ENCODE measurements at regions of chr6 and their contacts with region 1.

Region 1: GRCh38 chr6:159862103-159862502 is 28.7 kb upstream of the MAS1 start:
- DNase-seq: no peak
- ATAC-seq: no peak

Region 2: GRCh38 chr6:159941286-159942113 is 79.4 kb after region 1 on chr6:
- intact Hi-C with region 1: loop called (anchors 1 kb)
- DNase-seq: no peak
- ATAC-seq: no peak

Region 3: DNA sequence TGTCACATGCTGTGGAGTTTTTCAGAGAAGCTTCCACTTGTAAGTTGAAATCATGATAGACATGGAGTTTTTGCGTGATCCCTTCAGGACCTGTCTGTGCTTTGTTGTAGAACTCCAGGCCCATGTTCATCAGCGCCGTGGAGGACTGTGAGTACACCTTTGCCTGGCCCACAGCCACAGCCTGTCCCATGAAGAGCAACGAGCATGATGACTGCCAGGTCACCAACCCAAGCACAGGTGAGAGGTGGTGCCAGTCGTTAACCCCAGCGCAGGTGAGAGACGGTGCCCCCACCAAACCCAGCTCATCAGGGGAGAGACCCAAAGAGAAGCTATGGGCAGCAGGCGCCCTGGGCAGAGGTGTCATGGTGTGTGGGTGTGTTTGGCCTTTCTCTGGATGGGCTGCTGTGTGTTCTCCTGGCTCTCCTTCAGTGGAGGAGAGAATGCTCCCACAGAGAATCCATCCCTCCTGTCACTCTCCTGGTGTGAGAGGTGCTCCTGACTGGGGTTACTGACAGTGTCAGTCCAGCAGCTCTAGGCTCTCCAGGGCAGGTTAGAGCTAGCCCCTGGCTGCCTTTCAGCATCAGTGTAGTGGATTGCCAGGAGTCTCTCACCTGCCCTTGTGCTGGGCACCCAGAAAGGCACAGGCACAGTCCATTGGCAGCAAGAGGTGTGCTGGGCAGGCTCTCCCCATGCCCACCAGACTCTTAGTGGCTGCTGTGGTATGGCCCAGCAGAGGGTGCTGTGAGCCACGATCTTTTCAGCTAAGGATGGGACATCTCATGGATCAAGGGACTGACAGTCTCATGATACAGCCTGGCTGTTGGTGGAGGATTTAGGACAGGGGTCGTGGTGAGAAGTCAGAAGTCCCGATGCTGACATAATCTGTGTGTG is 209.9 kb after region 1 on chr6:
- intact Hi-C with region 1: loop called (anchors 10 kb)
- DNase-seq: no peak
- ATAC-seq: no peak

Region 4: DNA sequence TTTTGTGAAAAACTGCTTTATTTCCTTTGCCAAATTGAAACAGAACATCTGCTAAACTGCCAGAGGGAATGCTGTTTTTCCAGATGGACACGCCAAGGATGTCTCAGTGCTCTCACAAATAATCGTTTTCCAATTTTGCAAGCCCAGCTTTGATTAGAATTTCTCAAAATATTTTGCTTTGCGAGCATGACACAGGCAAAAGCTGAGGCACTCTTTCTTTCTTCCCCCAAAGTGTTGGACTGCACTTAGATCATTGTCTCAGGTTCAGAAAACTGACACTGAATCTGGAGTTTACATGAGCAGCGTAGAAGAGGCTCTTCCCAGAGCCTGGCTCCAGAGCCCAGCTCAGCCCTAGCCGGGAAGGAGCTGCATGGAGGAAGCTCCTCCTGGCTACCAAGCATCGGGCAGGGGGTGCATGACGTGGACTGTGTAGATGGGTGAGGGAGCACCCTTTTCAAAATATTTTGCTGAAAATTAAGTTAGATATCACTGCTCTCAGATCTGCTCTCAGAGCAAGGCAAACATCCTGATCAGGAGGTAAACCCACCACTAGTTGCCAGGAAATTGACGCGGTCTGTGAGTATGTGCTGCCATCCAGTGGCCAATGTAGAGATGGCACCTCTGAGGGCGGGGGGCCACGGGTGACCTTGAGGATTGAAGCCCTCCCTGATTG is 593.6 kb after region 1 on chr6:
- intact Hi-C with region 1: loop called (anchors 2 kb)
- DNase-seq: peak; percentile 70
- ATAC-seq: peak; percentile 84

Region 5: DNA sequence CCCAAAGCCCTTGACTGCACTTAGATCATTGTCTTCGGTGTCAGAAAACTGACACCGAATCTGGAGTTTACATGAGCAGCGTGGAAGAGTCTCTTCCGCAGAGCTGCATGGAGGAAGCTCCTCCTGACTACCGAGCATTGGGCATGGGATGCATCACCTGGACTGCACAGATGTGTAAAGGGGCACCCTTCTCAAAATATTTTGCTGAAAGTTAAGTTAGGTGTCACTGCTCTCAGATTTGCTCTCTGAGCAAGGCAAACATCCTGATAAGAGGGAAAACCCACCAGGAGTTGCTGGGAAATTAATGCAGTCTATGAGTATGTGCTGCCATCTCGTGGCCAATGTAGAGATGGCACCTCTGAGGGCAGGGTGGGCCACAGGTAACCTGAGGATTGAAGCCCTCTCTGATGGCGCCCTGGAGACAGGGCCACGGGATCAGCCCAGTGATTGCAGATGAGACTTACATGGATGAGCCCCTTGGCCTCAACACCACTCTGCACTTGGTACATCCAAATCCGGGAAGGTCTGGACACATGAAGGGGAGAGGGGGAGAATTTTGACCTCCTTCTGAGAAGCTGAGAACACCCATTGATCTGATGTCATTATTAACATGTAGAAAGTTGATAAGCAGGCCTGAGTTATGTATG is 672.1 kb after region 1 on chr6:
- intact Hi-C with region 1: loop called (anchors 5 kb)
- DNase-seq: no peak
- ATAC-seq: peak; percentile 70